ENCODE measurements at regions of chr1 and their contacts with region 1.

Region 1: GRCh38 chr1:26391450-26391849 is 18.9 kb upstream of the ZNF683 start:
- DNase-seq: peak; percentile 68 to 69
- ATAC-seq: peak; percentile 91 to 92
- H3K4me3 ChIP-seq: no peak overlapping the region
- H3K27ac ChIP-seq: peak overlapping the region in 1 of 2 experiments; percentile 7; a peak in 1 of 6 replicates
- H3K4me1 ChIP-seq: peaks cover 24% of the 10 kb centered on the region
- CTCF ChIP-seq: peak; percentile 82
- EP300 ChIP-seq: no peak
- POLR2A ChIP-seq: no peak
- RAD21 ChIP-seq: peak; percentile 86 to 93

Region 2: GRCh38 chr1:26279456-26280332 is 111.8 kb before region 1 on chr1 and contains the start of gene SH3BGRL3:
- CTCF ChIA-PET with region 1: interaction called, 34 read pairs
- POLR2A ChIA-PET with region 1: no interaction called
- DNase-seq: peak; percentile 73 to 75
- ATAC-seq: peak; percentile 82 to 90
- H3K4me3 ChIP-seq: peak within 1 kb of the TSS; percentile 98
- H3K27ac ChIP-seq: peak within 1 kb of the TSS; percentile 99
- H3K4me1 ChIP-seq: peaks cover 50% of the 10 kb centered on the region
- CTCF ChIP-seq: peak; percentile 41
- EP300 ChIP-seq: no peak
- POLR2A ChIP-seq: peak; percentile 77
- RAD21 ChIP-seq: no peak
- polyA plus RNA-seq, gene SH3BGRL3: 36.1 and 38.7 TPM in 2 replicates

Region 3: DNA sequence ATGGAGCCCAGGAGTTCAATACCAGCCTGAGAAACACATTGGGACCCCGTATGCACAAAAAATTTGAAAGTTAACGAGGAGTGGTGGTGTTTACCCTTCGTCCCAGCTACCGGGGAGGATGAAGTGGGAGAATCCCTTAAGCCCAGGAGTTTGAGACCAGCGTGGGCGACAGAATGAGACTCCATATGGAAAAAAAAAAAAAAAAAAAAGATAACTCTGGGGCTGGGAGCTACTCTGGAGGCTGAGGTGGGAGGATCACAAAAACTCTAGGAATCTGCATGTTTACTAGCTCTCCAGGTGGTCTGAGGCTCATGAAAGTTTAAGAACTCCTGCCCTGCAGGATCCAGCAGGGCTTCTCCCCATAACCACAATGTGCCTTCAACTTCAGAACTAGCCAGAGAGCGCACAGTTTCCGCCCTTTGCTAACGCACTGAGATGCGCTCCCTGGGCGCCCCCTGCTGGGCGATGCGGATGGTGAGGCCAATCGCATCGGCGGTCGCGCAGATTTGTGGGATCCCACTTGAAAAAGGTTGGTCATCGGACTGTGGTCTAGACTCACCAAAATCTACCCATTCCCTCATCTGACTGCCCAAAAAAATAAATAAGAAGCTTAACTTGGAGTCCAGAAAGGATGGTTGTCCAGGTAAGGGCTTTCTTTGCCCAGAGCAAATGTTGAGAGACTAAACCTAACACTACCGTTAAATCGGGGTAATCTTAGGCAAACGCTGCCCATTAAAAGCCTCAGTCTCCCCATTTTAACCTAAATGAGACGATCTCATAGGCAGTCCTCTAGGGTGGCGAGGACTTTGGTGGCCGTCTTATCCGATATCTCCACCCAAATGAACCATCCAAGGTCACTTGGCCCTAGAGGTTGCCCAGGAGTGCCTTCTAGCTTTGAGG is 27.7 kb before region 1 on chr1:
- CTCF ChIA-PET with region 1: interaction called, 11 read pairs
- POLR2A ChIA-PET with region 1: no interaction called
- DNase-seq: peak; percentile 57 to 59
- ATAC-seq: peak; percentile 73 to 90; a peak in 5 of 6 replicates
- H3K4me3 ChIP-seq: no peak overlapping the region
- H3K27ac ChIP-seq: peak overlapping the region in 1 of 2 experiments; percentile 47; a peak in 2 of 6 replicates
- H3K4me1 ChIP-seq: peaks cover 8% of the 10 kb centered on the region; the same call in 2 of the 3 replicates
- CTCF ChIP-seq: peak; percentile 81
- EP300 ChIP-seq: no peak
- POLR2A ChIP-seq: no peak
- RAD21 ChIP-seq: peak; percentile 71 to 76

Region 4: DNA sequence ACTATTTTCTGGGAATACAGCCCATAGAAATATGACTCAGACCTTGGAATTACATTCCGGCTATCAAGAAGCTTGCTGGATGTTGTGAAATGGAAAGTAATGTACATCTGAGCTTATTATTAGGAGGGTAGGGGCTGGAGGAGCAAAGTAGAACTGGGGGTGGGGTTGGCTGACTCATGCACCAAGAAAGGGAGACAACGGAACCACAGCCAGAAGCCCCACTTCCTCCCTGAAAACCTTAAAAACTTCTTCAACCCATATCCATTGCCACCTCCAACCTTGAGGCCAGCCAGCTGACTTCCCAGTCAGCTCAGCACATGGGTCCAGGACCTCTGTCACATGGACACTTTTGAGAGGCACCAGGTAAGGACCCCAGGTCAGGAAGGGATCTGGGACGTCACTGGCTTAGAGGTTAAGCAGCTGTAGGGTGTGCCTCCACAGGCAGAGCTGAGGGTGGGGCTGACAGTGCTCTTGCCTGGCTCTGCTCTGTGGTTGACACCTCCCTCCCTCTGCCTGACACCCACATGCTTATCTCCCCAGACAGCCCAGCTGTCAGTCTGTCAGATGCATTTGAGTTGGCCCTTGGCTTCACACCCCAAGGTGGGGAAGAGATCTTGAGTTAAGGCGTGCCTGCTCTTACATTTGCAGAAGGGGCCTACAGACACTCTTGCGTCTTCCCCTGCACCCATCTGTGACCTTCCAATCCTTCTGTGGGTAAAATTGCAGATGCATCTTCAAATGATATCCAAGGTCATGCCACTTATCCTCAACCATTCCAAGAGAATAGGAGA is 13.2 kb before region 1 on chr1:
- CTCF ChIA-PET with region 1: interaction called, 17 read pairs
- POLR2A ChIA-PET with region 1: no interaction called
- DNase-seq: peak; percentile 64 to 74
- ATAC-seq: peak; percentile 89 to 90
- H3K4me3 ChIP-seq: no peak overlapping the region
- H3K27ac ChIP-seq: peak overlapping the region; percentile 58 to 87
- H3K4me1 ChIP-seq: peaks cover 16% of the 10 kb centered on the region
- CTCF ChIP-seq: no peak
- EP300 ChIP-seq: peak; percentile 14 to 17; a peak in 2 of 5 replicates
- POLR2A ChIP-seq: no peak
- RAD21 ChIP-seq: no peak

Region 5: DNA sequence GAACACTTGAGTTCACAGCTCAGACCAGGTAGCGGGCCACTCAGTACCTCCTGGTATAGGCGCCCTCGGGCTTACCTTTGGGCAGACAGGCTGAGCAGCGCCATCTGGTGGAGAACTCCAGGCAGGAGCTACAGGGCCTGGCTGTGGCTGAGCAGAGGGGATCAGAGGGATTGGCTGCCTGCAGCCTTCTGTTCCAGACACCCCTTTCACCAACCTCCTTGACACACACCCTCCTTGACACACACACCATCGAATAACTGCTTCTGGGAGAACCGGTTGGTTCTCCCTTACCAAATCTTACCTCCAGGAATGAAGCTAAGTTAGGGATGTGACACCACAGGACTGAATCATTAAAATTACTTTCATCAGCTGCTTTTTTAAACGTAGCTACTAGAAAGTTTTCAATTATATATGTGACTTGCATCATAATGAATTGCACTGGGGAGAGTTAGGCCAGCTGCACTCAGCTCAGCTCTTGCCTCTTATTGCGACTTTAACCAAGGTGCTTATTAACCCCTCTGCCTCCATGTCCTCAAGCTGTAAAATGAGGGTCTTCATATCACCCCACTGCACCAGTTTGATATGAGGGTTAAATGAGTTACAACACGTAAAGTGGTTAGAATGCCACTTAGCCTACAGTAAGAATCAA is 25.8 kb after region 1 on chr1:
- CTCF ChIA-PET with region 1: interaction called, 10 read pairs
- POLR2A ChIA-PET with region 1: no interaction called
- DNase-seq: peak; percentile 70 to 71
- ATAC-seq: peak; percentile 96 to 99
- H3K4me3 ChIP-seq: no peak overlapping the region
- H3K27ac ChIP-seq: no peak overlapping the region
- H3K4me1 ChIP-seq: peaks cover 5% of the 10 kb centered on the region; the same call in 1 of the 3 replicates
- CTCF ChIP-seq: peak; percentile 75
- EP300 ChIP-seq: no peak
- POLR2A ChIP-seq: no peak
- RAD21 ChIP-seq: peak; percentile 64 to 74